ENCODE measurements at regions of chr5 and their contacts with region 1.

Region 1: GRCh38 chr5:95858661-95859326 is 36.3 kb upstream of the GLRX start:
- DNase-seq: peak; percentile 85 to 89
- H3K4me3 ChIP-seq: peak overlapping the region in 1 of 2 donors; percentile 13
- H3K27ac ChIP-seq: peak overlapping the region; percentile 79 to 83
- H3K4me1 ChIP-seq: peaks cover 0 to 8% of the 10 kb centered on the region in 2 donors
- H3K27me3 ChIP-seq: no peaks in the 10 kb centered on the region
- CTCF ChIP-seq: peak; percentile 94 to 97 (median 96)
- POLR2A ChIP-seq: peak in 1 of 2 donors; percentile 43

Region 2: DNA sequence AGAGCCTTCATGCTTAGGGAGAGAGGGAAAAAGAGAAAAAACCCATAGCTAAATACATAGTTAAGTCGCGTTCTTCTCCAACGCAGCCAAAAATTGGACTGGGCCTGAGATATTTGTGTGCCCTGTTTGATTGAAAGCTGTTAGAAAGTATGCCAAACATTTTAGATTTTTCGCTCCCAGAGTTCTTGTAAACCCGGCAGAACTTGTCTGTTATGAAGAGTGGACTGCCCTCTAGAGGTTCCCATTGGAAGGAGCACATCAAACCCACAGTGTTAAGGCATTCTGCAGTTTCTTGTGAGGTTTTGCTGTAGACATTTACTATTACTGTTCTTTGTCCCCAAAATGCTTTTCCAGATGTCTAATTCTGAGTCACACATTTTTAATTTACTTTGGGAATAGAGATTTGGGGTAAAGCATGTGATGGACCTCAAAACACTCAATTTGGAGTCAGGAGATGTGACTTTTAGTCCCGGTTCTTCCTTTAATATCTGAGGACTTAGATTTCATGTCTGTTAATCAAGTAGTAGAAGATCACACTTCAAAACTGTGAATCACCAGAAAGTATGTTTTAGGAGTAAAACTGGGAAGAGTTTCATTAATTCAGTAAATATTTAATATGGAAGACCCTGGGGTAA is 477.7 kb after region 1 on chr5:
- intact Hi-C with region 1: loop called (anchors 5 kb)
- DNase-seq: peak; percentile 42 to 65
- H3K4me3 ChIP-seq: no peak overlapping the region
- H3K27ac ChIP-seq: no peak overlapping the region
- H3K4me1 ChIP-seq: no peaks in the 10 kb centered on the region
- H3K27me3 ChIP-seq: no peaks in the 10 kb centered on the region
- CTCF ChIP-seq: peak; percentile 76 to 83 (median 80)
- POLR2A ChIP-seq: no peak